Heart left ventricle (tissue), 16 donors: ENCODE measurements at regions of chr19 and their contacts with region 1.

Region 1: GRCh38 chr19:33795370-33796163 is 1.1 kb upstream of the KCTD15 start:
- DNase-seq: peak; percentile 89 to 93 (median 91)
- ATAC-seq: peak; percentile 60 to 90 (median 86)
- H3K4me3 ChIP-seq: peak overlapping the region; percentile 65 to 97 (median 86)
- H3K27ac ChIP-seq: peak overlapping the region; percentile 88 to 100 (median 98)
- H3K4me1 ChIP-seq: peaks cover 0 to 35% (median 15%) of the 10 kb centered on the region in 12 donors
- H3K27me3 ChIP-seq: peaks cover 0 to 15% (median 0%) of the 10 kb centered on the region in 9 donors
- CTCF ChIP-seq: peak in 11 of 12 donors; percentile 56 to 95 (median 81)
- POLR2A ChIP-seq: peak in 1 of 2 donors; percentile 58

Region 2: DNA sequence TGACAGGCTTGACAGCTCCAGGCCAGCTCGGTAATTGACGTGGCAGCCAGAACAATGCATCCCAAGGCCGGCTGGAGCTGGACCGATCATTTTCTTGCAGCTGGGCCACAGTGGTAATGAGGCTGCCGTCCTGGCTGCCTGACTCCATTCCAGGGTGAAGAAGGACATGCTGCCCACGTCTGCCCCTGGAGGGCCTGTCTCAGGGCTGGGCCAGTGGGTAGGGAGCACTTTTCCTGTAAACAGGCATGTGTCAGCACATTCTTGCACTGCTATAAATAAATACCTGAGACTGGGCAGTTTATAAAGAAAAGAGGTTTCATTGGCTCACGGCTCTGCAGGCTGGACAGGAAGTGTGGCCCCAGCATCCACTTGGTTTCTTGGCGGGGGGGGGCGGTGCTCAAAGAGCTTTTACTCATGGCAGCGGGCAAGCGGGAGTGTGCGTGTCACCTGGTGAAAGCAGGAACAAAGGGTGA is 37.0 kb before region 1 on chr19:
- intact Hi-C with region 1: no loop called
- DNase-seq: no peak
- ATAC-seq: peak in 3 of 4 donors; percentile 38 to 51 (median 40)
- H3K4me3 ChIP-seq: no peak overlapping the region
- H3K27ac ChIP-seq: no peak overlapping the region
- H3K4me1 ChIP-seq: peaks cover 0 to 9% (median 0%) of the 10 kb centered on the region in 12 donors
- H3K27me3 ChIP-seq: peaks cover 0 to 6% (median 0%) of the 10 kb centered on the region in 9 donors
- CTCF ChIP-seq: no peak
- POLR2A ChIP-seq: no peak

Region 3: GRCh38 chr19:33819880-33820781 is 24.6 kb after region 1 on chr19:
- intact Hi-C with region 1: loop called in 5 of 10 experiments (anchors 1 to 2 kb)
- DNase-seq: peak; percentile 85 to 92 (median 86)
- ATAC-seq: peak; percentile 70 to 93 (median 86)
- H3K4me3 ChIP-seq: peak overlapping the region; percentile 4 to 63 (median 50)
- H3K27ac ChIP-seq: peak overlapping the region; percentile 77 to 96 (median 84)
- H3K4me1 ChIP-seq: peaks cover 0 to 56% (median 25%) of the 10 kb centered on the region in 12 donors
- H3K27me3 ChIP-seq: no peaks in the 10 kb centered on the region
- CTCF ChIP-seq: peak in 3 of 12 donors; percentile 7 to 14 (median 8)
- POLR2A ChIP-seq: peak in 1 of 2 donors; percentile 21

Region 4: GRCh38 chr19:33868788-33869412 is 73.3 kb after region 1 on chr19:
- intact Hi-C with region 1: loop called in 1 of 10 experiments (anchors 5 kb)
- DNase-seq: peak; percentile 26 to 69 (median 58)
- ATAC-seq: peak; percentile 78 to 93 (median 90)
- H3K4me3 ChIP-seq: peak overlapping the region in 10 of 12 donors; percentile 4 to 47 (median 24)
- H3K27ac ChIP-seq: peak overlapping the region in 5 of 12 donors; percentile 15 to 58 (median 33)
- H3K4me1 ChIP-seq: peaks cover 0 to 15% (median 7%) of the 10 kb centered on the region in 12 donors
- H3K27me3 ChIP-seq: no peaks in the 10 kb centered on the region
- CTCF ChIP-seq: peak in 4 of 12 donors; percentile 24 to 47 (median 32)
- POLR2A ChIP-seq: no peak

Region 5: GRCh38 chr19:33883859-33884519 is 88.4 kb after region 1 on chr19:
- intact Hi-C with region 1: loop called in 1 of 10 experiments (anchors 5 kb)
- DNase-seq: peak in 4 of 5 donors; percentile 45 to 66 (median 46)
- ATAC-seq: peak in 3 of 4 donors; percentile 74 to 83 (median 80)
- H3K4me3 ChIP-seq: peak overlapping the region in 6 of 12 donors; percentile 2 to 25 (median 20)
- H3K27ac ChIP-seq: peak overlapping the region in 11 of 12 donors; percentile 53 to 85 (median 67)
- H3K4me1 ChIP-seq: peaks cover 0 to 36% (median 19%) of the 10 kb centered on the region in 12 donors
- H3K27me3 ChIP-seq: no peaks in the 10 kb centered on the region
- CTCF ChIP-seq: no peak
- POLR2A ChIP-seq: no peak

Region 6: GRCh38 chr19:33905937-33906576 is 110.5 kb after region 1 on chr19:
- intact Hi-C with region 1: loop called in 8 of 10 experiments (anchors 1 to 10 kb)
- DNase-seq: peak; percentile 83 to 86 (median 86)
- ATAC-seq: peak; percentile 68 to 94 (median 91)
- H3K4me3 ChIP-seq: peak overlapping the region; percentile 22 to 67 (median 58)
- H3K27ac ChIP-seq: peak overlapping the region; percentile 72 to 95 (median 88)
- H3K4me1 ChIP-seq: peaks cover 0 to 31% (median 13%) of the 10 kb centered on the region in 12 donors
- H3K27me3 ChIP-seq: peaks cover 0 to 42% (median 7%) of the 10 kb centered on the region in 9 donors
- CTCF ChIP-seq: no peak
- POLR2A ChIP-seq: no peak

Region 7: GRCh38 chr19:33998739-33999345 is 203.3 kb after region 1 on chr19:
- intact Hi-C with region 1: loop called in 6 of 10 experiments (anchors 2 to 5 kb)
- DNase-seq: no peak
- ATAC-seq: no peak
- H3K4me3 ChIP-seq: no peak overlapping the region
- H3K27ac ChIP-seq: no peak overlapping the region
- H3K4me1 ChIP-seq: no peaks in the 10 kb centered on the region
- H3K27me3 ChIP-seq: peaks cover 0 to 13% (median 2%) of the 10 kb centered on the region in 9 donors
- CTCF ChIP-seq: peak; percentile 27 to 67 (median 52)
- POLR2A ChIP-seq: no peak